MCF 10A (cell line): ENCODE measurements at regions of chr3 and their contacts with region 1.

Region 1: GRCh38 chr3:46947981-46948791 is 28.4 kb downstream of the CCDC12 start:
- DNase-seq: peak; percentile 71
- H3K4me3 Mint-ChIP-seq: no peak overlapping the region
- H3K27ac Mint-ChIP-seq: peak overlapping the region; percentile 36
- H3K4me1 Mint-ChIP-seq: peaks cover 62% of the 10 kb centered on the region
- H3K27me3 Mint-ChIP-seq: no peaks in the 10 kb centered on the region
- CTCF ChIP-seq: no peak

Region 2: GRCh38 chr3:46935168-46935858 is 12.9 kb before region 1 on chr3:
- CTCF ChIA-PET with region 1: interaction called, 25 read pairs
- POLR2A ChIA-PET with region 1: interaction called, 34 read pairs
- intact Hi-C with region 1: no loop called
- DNase-seq: peak; percentile 92
- H3K4me3 Mint-ChIP-seq: peak overlapping the region; percentile 25
- H3K27ac Mint-ChIP-seq: peak overlapping the region; percentile 79
- H3K4me1 Mint-ChIP-seq: peaks cover 48% of the 10 kb centered on the region
- H3K27me3 Mint-ChIP-seq: no peaks in the 10 kb centered on the region
- CTCF ChIP-seq: peak; percentile 42

Region 3: GRCh38 chr3:46976326-46977190 is 28.4 kb after region 1 on chr3 and contains the start of gene CCDC12:
- CTCF ChIA-PET with region 1: interaction called, 3 read pairs
- POLR2A ChIA-PET with region 1: interaction called, 18 read pairs
- intact Hi-C with region 1: no loop called
- DNase-seq: peak; percentile 100
- H3K4me3 Mint-ChIP-seq: peak within 1 kb of the TSS; percentile 97
- H3K27ac Mint-ChIP-seq: peak within 1 kb of the TSS; percentile 100
- H3K4me1 Mint-ChIP-seq: peaks cover 30% of the 10 kb centered on the region
- H3K27me3 Mint-ChIP-seq: no peaks in the 10 kb centered on the region
- CTCF ChIP-seq: no peak
- total RNA-seq, gene CCDC12: 43.9 and 45.9 TPM in 2 replicates